Tibial artery (tissue), 4 donors: ENCODE measurements at regions of chr17 and their contacts with region 1.

Region 1: DNA sequence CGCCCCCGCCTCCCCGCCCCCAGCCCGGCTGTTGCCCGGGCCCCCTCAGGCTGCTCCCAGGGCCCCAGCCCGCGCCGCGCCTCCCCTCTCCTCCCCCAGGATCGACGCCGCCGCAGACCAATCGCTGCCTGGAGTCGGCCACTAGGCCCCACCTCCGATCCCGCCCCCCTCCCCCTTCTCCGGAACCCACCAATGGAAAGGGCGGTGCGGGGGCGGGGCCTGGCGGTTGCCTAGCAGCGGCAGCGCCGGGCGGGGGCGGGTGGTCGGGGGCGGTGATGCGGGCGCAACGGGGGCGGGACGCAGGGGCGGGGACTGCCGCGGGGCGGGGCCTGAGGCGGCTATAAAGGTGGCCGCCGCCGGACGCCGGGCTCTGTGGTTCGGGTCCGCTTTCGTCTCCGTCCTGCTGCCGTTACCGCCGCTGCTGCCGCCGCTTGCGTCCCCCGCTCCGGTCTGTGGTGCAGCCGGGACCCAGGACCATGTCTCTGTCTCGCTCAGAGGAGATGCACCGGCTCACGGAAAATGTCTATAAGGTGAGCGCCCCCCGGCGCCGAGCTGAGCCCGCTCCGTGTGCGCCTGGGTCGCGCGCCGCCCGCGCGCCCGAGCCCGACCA is at the start of gene BAIAP2:
- DNase-seq: peak; percentile 91 to 95
- H3K4me3 ChIP-seq: peak within 1 kb of the TSS; percentile 48 to 62
- H3K27ac ChIP-seq: no peak within 1 kb of the TSS
- H3K4me1 ChIP-seq: peaks cover 0 to 46% (median 36%) of the 10 kb centered on the region in 4 donors
- H3K27me3 ChIP-seq: peaks cover 0 to 51% of the 10 kb centered on the region in 2 donors
- CTCF ChIP-seq: no peak

Region 2: DNA sequence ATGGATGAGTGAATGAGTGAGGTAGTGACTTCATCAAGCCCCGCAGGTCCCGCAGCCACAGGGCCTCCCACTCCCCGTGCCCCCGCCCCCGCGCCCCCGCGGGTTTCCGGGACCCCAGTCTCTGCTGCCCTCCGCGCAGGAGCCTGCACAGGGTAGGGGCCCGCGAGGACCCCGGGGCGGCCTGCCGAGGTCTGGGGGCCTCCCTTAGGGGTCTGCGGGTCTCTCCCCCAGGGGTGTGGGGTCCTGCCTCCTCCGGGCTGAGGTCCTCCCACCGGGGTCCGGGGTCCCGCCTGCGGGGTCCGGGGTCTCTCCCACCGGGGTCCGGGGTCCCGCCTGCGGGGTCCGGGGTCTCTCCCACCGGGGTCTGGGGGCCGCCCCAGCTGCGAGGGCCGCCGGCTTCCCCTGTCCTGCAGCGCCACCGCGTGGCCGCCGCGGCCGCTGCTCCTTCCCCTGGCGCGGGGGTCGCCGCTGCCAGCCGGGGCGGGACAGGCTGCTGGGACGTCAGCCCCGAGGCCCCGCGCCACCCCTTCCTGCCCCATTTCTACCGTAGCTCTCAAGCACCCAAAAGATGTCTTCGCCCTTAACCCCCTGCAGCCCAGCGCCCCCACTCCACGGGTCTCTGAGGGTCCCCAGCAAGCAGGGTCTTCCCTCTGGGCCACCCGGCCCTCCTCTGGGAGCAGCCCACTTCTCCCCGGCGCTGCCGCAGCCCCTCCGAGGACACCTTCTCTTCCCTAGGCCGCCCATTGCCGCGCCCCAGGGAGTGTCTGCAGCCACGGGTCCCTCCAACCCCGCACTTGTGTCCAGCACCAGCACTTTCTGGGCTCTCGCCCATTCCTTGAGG is 53.6 kb before region 1 on chr17:
- intact Hi-C with region 1: no loop called
- DNase-seq: no peak
- H3K4me3 ChIP-seq: peak overlapping the region in 1 of 2 donors; percentile 16
- H3K27ac ChIP-seq: no peak overlapping the region
- H3K4me1 ChIP-seq: peaks cover 0 to 28% (median 12%) of the 10 kb centered on the region in 4 donors
- H3K27me3 ChIP-seq: peaks cover 0 to 5% of the 10 kb centered on the region in 2 donors
- CTCF ChIP-seq: peak; percentile 77 to 78

Region 3: GRCh38 chr17:81094509-81095382 is 59.9 kb after region 1 on chr17:
- intact Hi-C with region 1: loop called (anchors 5 kb)
- DNase-seq: peak; percentile 84 to 90
- H3K4me3 ChIP-seq: peak overlapping the region in 1 of 2 donors; percentile 8
- H3K27ac ChIP-seq: peak overlapping the region; percentile 22 to 46
- H3K4me1 ChIP-seq: peaks cover 0 to 36% (median 29%) of the 10 kb centered on the region in 4 donors
- H3K27me3 ChIP-seq: no peaks in the 10 kb centered on the region
- CTCF ChIP-seq: no peak